HEK293T (cell line): ENCODE measurements at regions of chr11 and their contacts with region 1.

Region 1: GRCh38 chr11:133834682-133835592 is 10.4 kb downstream of the SPATA19 start:
- DNase-seq: peak; percentile 71

Region 2: DNA sequence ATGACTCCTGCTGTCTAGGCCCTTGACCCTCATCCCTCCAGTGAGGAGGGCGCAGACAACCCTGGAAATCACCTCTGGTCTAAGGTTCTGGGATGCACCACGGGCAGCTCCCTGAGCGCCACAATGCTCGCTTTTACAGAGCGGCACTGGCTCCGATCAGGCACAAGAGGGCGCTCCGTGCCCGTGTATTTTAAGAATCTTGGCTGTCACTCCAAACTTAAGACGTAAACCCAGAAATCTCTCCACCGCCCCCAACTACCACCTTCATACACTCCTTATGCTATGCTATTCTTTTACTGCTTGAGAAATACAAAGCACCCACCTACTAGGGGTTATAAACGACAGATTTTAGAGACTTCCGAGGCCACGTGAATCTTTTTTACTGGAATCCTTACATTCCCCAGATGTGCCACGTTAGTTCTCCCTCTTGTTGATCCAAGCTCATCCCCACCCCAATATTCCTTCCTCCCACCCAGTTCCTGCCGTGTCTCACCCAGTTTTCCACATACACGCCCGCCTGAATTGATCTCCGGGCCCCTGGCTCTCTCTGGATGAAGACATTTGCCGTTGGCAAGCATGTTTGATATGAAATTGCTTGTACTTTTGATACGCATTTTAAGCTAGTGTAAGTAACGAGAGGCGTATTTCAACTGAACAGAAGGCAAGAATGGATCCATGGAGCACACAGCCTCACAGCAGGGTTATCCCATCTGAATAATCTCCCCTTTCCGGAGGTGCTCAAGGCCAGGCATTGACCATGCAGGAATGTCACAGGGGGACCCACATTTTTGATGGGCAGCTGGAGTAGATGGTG is 756.1 kb before region 1 on chr11:
- CTCF ChIA-PET with region 1: interaction called, 19 read pairs
- POLR2A ChIA-PET with region 1: no interaction called
- DNase-seq: peak; percentile 63

Region 3: DNA sequence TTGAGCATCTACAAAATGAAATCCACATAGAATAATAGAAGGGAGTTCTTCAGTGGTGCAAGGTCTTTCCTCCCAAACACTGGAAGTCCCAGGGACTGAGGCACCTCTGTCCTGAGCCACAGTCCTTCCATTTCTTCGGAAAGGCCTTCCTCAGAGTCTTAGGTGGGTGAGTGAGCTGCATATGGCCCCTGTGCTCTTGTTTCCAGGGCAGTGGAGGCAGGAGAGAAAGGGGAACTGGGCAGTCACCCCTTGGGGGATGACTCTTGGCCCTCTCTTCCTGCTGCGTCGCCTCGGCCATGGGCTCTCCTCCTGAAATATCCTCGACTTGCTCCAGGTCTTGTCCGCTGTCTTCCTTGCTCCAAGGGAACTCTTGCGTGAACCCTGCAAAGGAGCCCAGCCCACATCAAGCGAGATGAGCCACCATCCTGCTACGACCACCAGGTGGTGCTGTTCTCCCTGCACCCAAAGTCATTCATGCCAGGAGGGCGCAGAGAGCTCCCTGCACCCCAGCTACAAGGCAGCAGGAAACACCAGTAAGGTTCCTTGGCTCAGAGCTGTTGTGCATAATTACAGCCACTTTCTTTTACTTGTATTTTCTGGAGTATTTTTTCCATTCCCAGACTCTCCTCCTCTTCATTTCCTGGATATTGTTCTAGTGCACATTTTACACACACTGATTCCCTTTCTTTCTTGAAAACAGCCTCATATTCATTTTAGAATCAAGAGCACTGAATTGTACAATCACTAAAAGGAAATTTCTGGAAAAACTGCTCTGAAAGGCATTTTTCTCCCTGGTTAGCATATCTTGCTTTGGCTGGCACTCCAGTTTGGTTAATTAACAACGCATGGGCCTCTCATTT is 700.4 kb before region 1 on chr11:
- CTCF ChIA-PET with region 1: interaction called, 14 read pairs
- POLR2A ChIA-PET with region 1: no interaction called
- DNase-seq: peak; percentile 67